T-cell (primary cell): ENCODE measurements at regions of chr11 and their contacts with region 1.

Region 1: DNA sequence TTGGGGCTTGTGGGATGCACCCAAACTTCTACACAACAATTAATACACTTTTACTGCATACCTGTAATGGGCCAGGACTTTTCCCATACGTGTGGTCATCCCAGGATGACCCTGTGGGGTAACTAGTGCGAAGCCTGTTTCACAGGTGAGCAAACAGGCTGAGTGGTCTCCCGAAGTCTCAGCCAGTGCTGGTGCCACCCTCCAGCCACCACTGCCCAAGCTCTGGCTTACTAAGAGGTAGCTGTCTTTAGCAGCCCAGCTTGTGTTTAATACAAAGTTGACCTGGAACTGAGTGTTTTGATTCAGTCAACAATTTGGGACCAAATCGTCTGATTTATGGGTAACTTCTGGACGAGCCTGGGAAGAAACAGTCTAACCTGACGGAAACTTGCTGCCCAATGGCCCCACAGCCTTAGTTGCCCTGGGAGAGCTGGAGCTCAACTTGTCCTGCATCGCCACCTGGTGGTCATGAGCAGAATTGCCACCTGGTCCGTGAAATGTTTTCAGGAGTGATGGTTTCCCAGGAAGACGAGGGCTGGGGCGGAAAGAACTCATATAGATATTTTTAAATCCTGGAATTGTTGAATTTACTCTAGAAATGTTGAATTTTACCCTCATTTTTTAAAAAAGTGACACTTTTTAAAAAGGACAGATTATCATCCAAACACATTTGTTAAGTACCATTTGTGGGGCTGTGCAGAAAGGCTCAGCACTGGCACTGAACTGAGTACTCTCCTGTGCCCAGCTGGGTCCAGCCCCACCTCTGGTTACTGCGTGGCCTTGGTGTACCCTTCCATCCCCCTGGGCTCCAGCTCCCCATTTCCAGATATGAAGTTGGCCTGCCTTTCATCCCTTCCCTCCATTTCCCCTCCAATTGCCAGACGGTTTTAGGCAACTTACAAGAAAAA is 95.5 kb upstream of the PARVA start:
- DNase-seq: peak; percentile 15 to 86 (median 69)
- ATAC-seq: peak; percentile 61 to 67 (median 63)
- H3K4me3 ChIP-seq: no peak overlapping the region
- H3K4me3 Mint-ChIP-seq: no peak overlapping the region
- H3K27ac ChIP-seq: no peak overlapping the region
- H3K27ac Mint-ChIP-seq: no peak overlapping the region
- H3K4me1 ChIP-seq: peaks cover 0 to 8% of the 10 kb centered on the region in 2 experiments
- H3K4me1 Mint-ChIP-seq: peaks cover 0 to 2% (median 0%) of the 10 kb centered on the region in 3 donors
- H3K27me3 ChIP-seq: peaks cover 0 to 4% of the 10 kb centered on the region in 2 experiments
- H3K27me3 Mint-ChIP-seq: no peaks in the 10 kb centered on the region

Region 2: GRCh38 chr11:11931461-11932055 is 350.3 kb before region 1 on chr11:
- CTCF ChIA-PET with region 1: interaction called in 1 of 2 experiments, 10 read pairs
- POLR2A ChIA-PET with region 1: no interaction called
- DNase-seq: peak in 6 of 35 experiments; percentile 0 to 61 (median 2)
- ATAC-seq: peak in 2 of 4 experiments; percentile 43 to 54
- H3K4me3 ChIP-seq: no peak overlapping the region
- H3K4me3 Mint-ChIP-seq: no peak overlapping the region
- H3K27ac ChIP-seq: no peak overlapping the region
- H3K27ac Mint-ChIP-seq: no peak overlapping the region
- H3K4me1 ChIP-seq: no peaks in the 10 kb centered on the region
- H3K4me1 Mint-ChIP-seq: peaks cover 0 to 7% (median 2%) of the 10 kb centered on the region in 3 donors
- H3K27me3 ChIP-seq: no peaks in the 10 kb centered on the region
- H3K27me3 Mint-ChIP-seq: no peaks in the 10 kb centered on the region

Region 3: GRCh38 chr11:12052676-12053605 is 228.9 kb before region 1 on chr11:
- CTCF ChIA-PET with region 1: interaction called, 47 to 85 read pairs
- POLR2A ChIA-PET with region 1: no interaction called
- DNase-seq: peak in 1 of 35 experiments; percentile 28
- ATAC-seq: peak in 2 of 4 experiments; percentile 31 to 52
- H3K4me3 ChIP-seq: no peak overlapping the region
- H3K4me3 Mint-ChIP-seq: no peak overlapping the region
- H3K27ac ChIP-seq: no peak overlapping the region
- H3K27ac Mint-ChIP-seq: no peak overlapping the region
- H3K4me1 ChIP-seq: peaks cover 0 to 6% of the 10 kb centered on the region in 2 experiments
- H3K4me1 Mint-ChIP-seq: no peaks in the 10 kb centered on the region
- H3K27me3 ChIP-seq: no peaks in the 10 kb centered on the region
- H3K27me3 Mint-ChIP-seq: no peaks in the 10 kb centered on the region